ENCODE measurements at regions of chr6 and their contacts with region 1.

Region 1: GRCh38 chr6:168895102-168895812 is 358.4 kb downstream of the THBS2 start:
- DNase-seq: peak; percentile 57 to 76 (median 72)
- ATAC-seq: peak; percentile 94
- H3K4me3 ChIP-seq: peak overlapping the region; percentile 49
- H3K4me3 Mint-ChIP-seq: peak overlapping the region; percentile 12 to 79 (median 70)
- H3K27ac ChIP-seq: no peak overlapping the region
- H3K27ac Mint-ChIP-seq: peak overlapping the region; percentile 24 to 83 (median 71)
- H3K4me1 ChIP-seq: peaks cover 6% of the 10 kb centered on the region in 2 donors
- H3K4me1 Mint-ChIP-seq: peaks cover 7 to 24% (median 15%) of the 10 kb centered on the region in 7 donors
- H3K27me3 ChIP-seq: no peaks in the 10 kb centered on the region
- H3K27me3 Mint-ChIP-seq: peaks cover 0 to 3% (median 0%) of the 10 kb centered on the region in 5 donors

Region 2: GRCh38 chr6:168956884-168957730 is 61.9 kb after region 1 on chr6:
- CTCF ChIA-PET with region 1: interaction called, 3 read pairs
- POLR2A ChIA-PET with region 1: no interaction called
- intact Hi-C with region 1: loop called in 1 of 2 experiments (anchors 2 kb)
- DNase-seq: peak in 6 of 9 donors; percentile 8 to 44 (median 32)
- ATAC-seq: peak; percentile 73
- H3K4me3 ChIP-seq: no peak overlapping the region
- H3K4me3 Mint-ChIP-seq: no peak overlapping the region
- H3K27ac ChIP-seq: no peak overlapping the region
- H3K27ac Mint-ChIP-seq: no peak overlapping the region
- H3K4me1 ChIP-seq: no peaks in the 10 kb centered on the region
- H3K4me1 Mint-ChIP-seq: no peaks in the 10 kb centered on the region
- H3K27me3 ChIP-seq: no peaks in the 10 kb centered on the region
- H3K27me3 Mint-ChIP-seq: peaks cover 4 to 28% (median 24%) of the 10 kb centered on the region in 5 donors

Region 3: GRCh38 chr6:169654598-169655391 is 759.5 kb after region 1 on chr6:
- CTCF ChIA-PET with region 1: no interaction called
- POLR2A ChIA-PET with region 1: no interaction called
- intact Hi-C with region 1: loop called in 1 of 2 experiments (anchors 1 kb)
- DNase-seq: peak; percentile 59 to 86 (median 73)
- ATAC-seq: peak; percentile 99
- H3K4me3 ChIP-seq: peak overlapping the region; percentile 64
- H3K4me3 Mint-ChIP-seq: peak overlapping the region; percentile 86 to 95 (median 92)
- H3K27ac ChIP-seq: peak overlapping the region; percentile 72
- H3K27ac Mint-ChIP-seq: peak overlapping the region; percentile 71 to 95 (median 89)
- H3K4me1 ChIP-seq: no peaks in the 10 kb centered on the region
- H3K4me1 Mint-ChIP-seq: peaks cover 0 to 19% (median 15%) of the 10 kb centered on the region in 7 donors
- H3K27me3 ChIP-seq: no peaks in the 10 kb centered on the region
- H3K27me3 Mint-ChIP-seq: no peaks in the 10 kb centered on the region

Region 4: DNA sequence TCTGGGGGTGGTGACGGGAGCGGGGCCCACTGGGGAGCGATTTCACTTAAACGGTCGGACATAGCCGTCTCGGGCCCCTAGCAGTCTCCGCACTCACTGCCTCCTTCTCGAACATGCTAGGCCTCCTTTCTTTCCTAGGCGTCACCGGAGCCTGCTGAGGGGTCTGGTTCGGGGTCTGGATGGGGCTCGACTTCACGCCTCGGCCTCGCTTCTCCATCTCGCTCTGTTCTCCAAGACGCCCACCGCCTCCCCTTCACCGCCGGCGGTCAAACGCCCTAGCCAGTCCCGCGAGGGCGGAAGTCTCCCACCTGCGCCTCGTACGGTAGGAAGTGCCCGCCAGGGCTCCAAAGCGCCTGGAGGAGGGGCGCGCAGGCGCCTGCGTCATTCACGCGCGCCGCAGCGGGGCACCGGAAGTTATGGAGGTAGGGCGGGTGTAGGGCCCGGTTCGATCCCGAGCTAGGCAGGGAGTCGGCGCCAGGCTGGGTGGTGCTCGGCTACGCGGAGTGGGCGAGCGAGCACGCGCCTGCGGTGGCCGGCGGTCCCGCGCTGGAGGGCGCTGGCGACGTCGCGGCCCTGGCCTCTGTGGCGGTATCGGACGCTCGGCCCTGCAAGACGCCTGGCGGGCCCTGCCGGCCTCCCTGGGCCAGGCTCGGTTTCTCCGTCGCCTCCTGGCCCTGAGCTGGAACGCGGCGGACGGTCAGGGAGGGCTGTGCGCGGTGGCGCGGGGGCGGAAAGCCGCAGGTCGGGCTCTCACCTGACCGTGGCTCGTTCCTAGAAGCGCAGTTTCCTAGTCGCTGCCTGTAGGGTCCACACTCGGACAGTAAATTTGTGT is 856.2 kb after region 1 on chr6 and contains the starts of genes DYNLT2 and ERMARD:
- CTCF ChIA-PET with region 1: no interaction called
- POLR2A ChIA-PET with region 1: no interaction called
- intact Hi-C with region 1: loop called in 1 of 2 experiments (anchors 1 kb)
- DNase-seq: peak; percentile 89 to 97 (median 94)
- ATAC-seq: peak; percentile 98
- H3K4me3 ChIP-seq: peak within 1 kb of the TSS; percentile 84
- H3K4me3 Mint-ChIP-seq: peak within 1 kb of the TSS; percentile 92 to 100 (median 98)
- H3K27ac ChIP-seq: peak within 1 kb of the TSS; percentile 92
- H3K27ac Mint-ChIP-seq: peak within 1 kb of the TSS; percentile 96 to 100 (median 100)
- H3K4me1 ChIP-seq: peaks cover 17% of the 10 kb centered on the region in 2 donors
- H3K4me1 Mint-ChIP-seq: peaks cover 21 to 43% (median 37%) of the 10 kb centered on the region in 7 donors
- H3K27me3 ChIP-seq: no peaks in the 10 kb centered on the region
- H3K27me3 Mint-ChIP-seq: peaks cover 0 to 4% (median 0%) of the 10 kb centered on the region in 5 donors
- total RNA-seq, gene DYNLT2: 2.5 to 4.7 (median 4.1) TPM
- total RNA-seq, gene ERMARD: 30.3 to 43.7 (median 35.7) TPM

Region 5: GRCh38 chr6:170529839-170530469 is 1634.7 kb after region 1 on chr6:
- CTCF ChIA-PET with region 1: interaction called, 4 read pairs
- POLR2A ChIA-PET with region 1: no interaction called
- intact Hi-C with region 1: loop called in 1 of 2 experiments (anchors 1 kb)
- DNase-seq: peak; percentile 33 to 64 (median 51)
- ATAC-seq: peak; percentile 90
- H3K4me3 ChIP-seq: no peak overlapping the region
- H3K4me3 Mint-ChIP-seq: no peak overlapping the region
- H3K27ac ChIP-seq: no peak overlapping the region
- H3K27ac Mint-ChIP-seq: peak overlapping the region in 4 of 9 donors; percentile 8 to 51 (median 26)
- H3K4me1 ChIP-seq: no peaks in the 10 kb centered on the region
- H3K4me1 Mint-ChIP-seq: peaks cover 0 to 8% (median 0%) of the 10 kb centered on the region in 7 donors
- H3K27me3 ChIP-seq: no peaks in the 10 kb centered on the region
- H3K27me3 Mint-ChIP-seq: peaks cover 0 to 7% (median 0%) of the 10 kb centered on the region in 5 donors